Caco-2 (cell line): ENCODE measurements at regions of chr13 and their contacts with region 1.

Region 1: GRCh38 chr13:70960841-70961443 is 852.7 kb upstream of the KLHL1 start:
- DNase-seq: peak in 1 of 2 experiments; percentile 54
- H3K4me3 ChIP-seq: no peak overlapping the region
- H3K4me3 Mint-ChIP-seq: no peak overlapping the region
- H3K27ac Mint-ChIP-seq: no peak overlapping the region
- H3K4me1 ChIP-seq: no peaks in the 10 kb centered on the region
- H3K4me1 Mint-ChIP-seq: no peaks in the 10 kb centered on the region
- H3K27me3 ChIP-seq: no peaks in the 10 kb centered on the region
- H3K27me3 Mint-ChIP-seq: peaks cover under 1% of the 10 kb centered on the region
- CTCF ChIP-seq: peak; percentile 56 to 82

Region 2: DNA sequence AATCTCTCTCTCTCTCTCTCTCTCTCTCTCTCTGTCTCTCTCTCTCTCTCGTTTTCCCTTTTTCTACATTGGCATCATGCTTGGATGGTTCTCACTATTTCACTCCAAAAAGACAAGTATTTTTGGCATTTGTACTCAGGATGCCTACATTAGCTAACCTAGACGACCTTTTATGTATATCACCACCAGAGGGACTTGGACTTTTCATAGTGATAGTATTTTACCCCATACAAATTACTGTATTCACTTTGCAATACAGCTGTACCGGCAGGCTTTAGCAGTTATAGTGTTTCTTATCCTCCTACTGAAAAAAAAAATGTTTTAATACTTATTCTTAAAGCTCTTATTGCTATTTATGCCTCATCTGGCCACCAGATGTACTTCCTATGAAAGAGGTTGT is 165.5 kb before region 1 on chr13:
- CTCF ChIA-PET with region 1: no interaction called
- POLR2A ChIA-PET with region 1: no interaction called
- intact Hi-C with region 1: loop called (anchors 5 kb)
- DNase-seq: no peak
- H3K4me3 ChIP-seq: no peak overlapping the region
- H3K4me3 Mint-ChIP-seq: no peak overlapping the region
- H3K27ac Mint-ChIP-seq: no peak overlapping the region
- H3K4me1 ChIP-seq: no peaks in the 10 kb centered on the region
- H3K4me1 Mint-ChIP-seq: no peaks in the 10 kb centered on the region
- H3K27me3 ChIP-seq: no peaks in the 10 kb centered on the region
- H3K27me3 Mint-ChIP-seq: no peaks in the 10 kb centered on the region
- CTCF ChIP-seq: peak in 1 of 2 experiments; percentile 29

Region 3: GRCh38 chr13:71046360-71047079 is 85.6 kb after region 1 on chr13:
- CTCF ChIA-PET with region 1: no interaction called
- POLR2A ChIA-PET with region 1: no interaction called
- intact Hi-C with region 1: loop called (anchors 10 kb)
- DNase-seq: no peak
- H3K4me3 ChIP-seq: no peak overlapping the region
- H3K4me3 Mint-ChIP-seq: no peak overlapping the region
- H3K27ac Mint-ChIP-seq: no peak overlapping the region
- H3K4me1 ChIP-seq: peaks cover 20% of the 10 kb centered on the region
- H3K4me1 Mint-ChIP-seq: peaks cover 22% of the 10 kb centered on the region
- H3K27me3 ChIP-seq: no peaks in the 10 kb centered on the region
- H3K27me3 Mint-ChIP-seq: no peaks in the 10 kb centered on the region
- CTCF ChIP-seq: no peak

Region 4: GRCh38 chr13:71137101-71137500 is 176.2 kb after region 1 on chr13:
- CTCF ChIA-PET with region 1: interaction called, 7 read pairs
- POLR2A ChIA-PET with region 1: no interaction called
- intact Hi-C with region 1: loop called (anchors 1 kb)
- DNase-seq: no peak
- H3K4me3 ChIP-seq: no peak overlapping the region
- H3K4me3 Mint-ChIP-seq: no peak overlapping the region
- H3K27ac Mint-ChIP-seq: no peak overlapping the region
- H3K4me1 ChIP-seq: no peaks in the 10 kb centered on the region
- H3K4me1 Mint-ChIP-seq: no peaks in the 10 kb centered on the region
- H3K27me3 ChIP-seq: no peaks in the 10 kb centered on the region
- H3K27me3 Mint-ChIP-seq: no peaks in the 10 kb centered on the region
- CTCF ChIP-seq: no peak

Region 5: GRCh38 chr13:71303144-71303543 is 342.2 kb after region 1 on chr13:
- CTCF ChIA-PET with region 1: no interaction called
- POLR2A ChIA-PET with region 1: no interaction called
- intact Hi-C with region 1: no loop called
- DNase-seq: no peak
- H3K4me3 ChIP-seq: no peak overlapping the region
- H3K4me3 Mint-ChIP-seq: no peak overlapping the region
- H3K27ac Mint-ChIP-seq: no peak overlapping the region
- H3K4me1 ChIP-seq: peaks cover 10% of the 10 kb centered on the region
- H3K4me1 Mint-ChIP-seq: no peaks in the 10 kb centered on the region
- H3K27me3 ChIP-seq: no peaks in the 10 kb centered on the region
- H3K27me3 Mint-ChIP-seq: no peaks in the 10 kb centered on the region
- CTCF ChIP-seq: no peak

Region 6: GRCh38 chr13:71320452-71320851 is 359.5 kb after region 1 on chr13:
- CTCF ChIA-PET with region 1: no interaction called
- POLR2A ChIA-PET with region 1: no interaction called
- intact Hi-C with region 1: loop called (anchors 10 kb)
- DNase-seq: peak in 1 of 2 experiments; percentile 55
- H3K4me3 ChIP-seq: no peak overlapping the region
- H3K4me3 Mint-ChIP-seq: no peak overlapping the region
- H3K27ac Mint-ChIP-seq: no peak overlapping the region
- H3K4me1 ChIP-seq: no peaks in the 10 kb centered on the region
- H3K4me1 Mint-ChIP-seq: no peaks in the 10 kb centered on the region
- H3K27me3 ChIP-seq: no peaks in the 10 kb centered on the region
- H3K27me3 Mint-ChIP-seq: no peaks in the 10 kb centered on the region
- CTCF ChIP-seq: peak; percentile 67 to 69